Right ventricle myocardium superior (tissue), 1 donor: ENCODE measurements at regions of chr1 and their contacts with region 1.

Region 1: GRCh38 chr1:39098546-39099250 is 72.5 kb downstream of the NDUFS5 start:
- DNase-seq: peak; percentile 63
- ATAC-seq: peak; percentile 81

Region 2: DNA sequence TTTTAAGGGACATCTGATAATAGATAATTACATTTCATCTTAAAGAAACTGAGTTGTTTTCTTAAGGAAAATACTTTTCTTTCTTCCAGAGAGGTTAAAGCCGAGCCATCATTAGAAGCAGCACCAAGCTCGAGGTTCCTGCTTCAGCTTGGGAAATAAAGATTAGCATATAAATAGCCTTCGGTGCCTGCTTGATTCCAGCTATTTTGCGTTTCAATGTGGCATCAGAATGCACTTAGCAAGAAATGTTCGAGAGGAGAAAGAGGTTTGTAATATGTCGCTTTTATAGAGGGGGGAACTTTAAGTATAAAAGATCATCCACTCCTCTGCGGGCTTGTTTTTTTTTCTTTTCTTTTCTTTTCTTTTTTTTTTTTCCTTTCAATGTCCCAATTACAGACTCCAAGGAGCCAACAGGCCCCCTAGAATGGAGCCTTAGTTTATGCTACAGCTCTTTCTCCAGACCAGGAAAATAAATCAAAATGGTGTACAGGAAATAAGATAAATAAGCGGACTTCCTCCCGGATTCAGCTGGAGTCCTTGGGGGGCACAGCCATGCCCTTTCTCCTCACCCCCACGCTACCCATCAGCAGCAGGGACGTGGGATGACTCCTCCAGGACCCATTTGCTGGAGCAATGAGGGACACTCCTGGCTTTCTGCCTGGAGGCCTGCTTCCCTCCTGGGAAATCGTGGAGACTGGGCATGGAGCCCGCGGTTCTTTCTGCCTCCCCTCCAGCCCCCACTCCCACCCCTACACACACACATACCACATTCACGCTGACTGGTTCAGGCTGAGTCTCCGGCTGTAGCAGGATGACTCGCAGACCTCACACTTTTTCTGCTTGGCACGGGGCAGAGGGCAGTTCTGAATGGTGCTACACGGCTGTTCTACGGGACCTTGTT is 370.8 kb before region 1 on chr1:
- intact Hi-C with region 1: no loop called
- DNase-seq: peak; percentile 64
- ATAC-seq: peak; percentile 64

Region 3: GRCh38 chr1:39196244-39197215 is 97.8 kb after region 1 on chr1:
- intact Hi-C with region 1: loop called (anchors 2 kb)
- DNase-seq: no peak
- ATAC-seq: no peak

Region 4: DNA sequence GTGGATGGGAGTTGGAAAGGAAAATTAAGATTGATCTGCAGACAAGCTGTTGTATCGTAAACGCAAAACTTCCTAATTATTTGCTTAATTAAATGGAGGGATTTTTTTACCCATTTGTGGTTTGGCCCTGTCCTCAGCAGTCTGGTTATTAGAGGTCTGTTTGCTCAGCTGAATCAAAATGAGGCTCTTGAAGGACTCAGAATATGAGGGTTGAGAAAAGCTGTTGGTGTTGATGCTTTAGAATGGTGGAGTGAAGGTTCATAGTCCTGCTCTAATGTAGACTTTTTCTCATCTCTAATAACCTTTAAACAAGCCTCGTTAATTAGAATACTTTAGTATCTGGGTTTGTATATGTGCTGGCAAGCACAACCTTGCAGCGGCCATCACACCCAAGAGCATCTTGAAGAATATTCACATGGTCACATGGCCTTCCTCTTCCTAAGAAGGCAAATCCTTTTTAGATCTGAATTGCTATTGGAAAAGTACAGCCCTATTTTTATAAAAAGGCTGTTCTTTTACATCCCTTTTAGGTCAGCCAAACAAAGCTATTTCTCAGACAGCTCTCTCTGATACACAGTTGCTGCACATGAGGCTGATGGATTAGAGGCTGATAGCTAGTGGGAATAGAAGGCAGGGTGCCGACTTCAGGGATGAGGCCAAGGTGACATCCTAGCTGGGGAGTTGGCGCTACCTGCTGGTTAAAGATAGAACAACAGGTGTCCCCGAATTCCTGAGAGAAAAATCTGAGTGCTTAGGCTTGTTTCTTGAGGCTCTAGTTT is 159.6 kb after region 1 on chr1:
- intact Hi-C with region 1: loop called (anchors 2 kb)
- DNase-seq: peak; percentile 59
- ATAC-seq: peak; percentile 86

Region 5: DNA sequence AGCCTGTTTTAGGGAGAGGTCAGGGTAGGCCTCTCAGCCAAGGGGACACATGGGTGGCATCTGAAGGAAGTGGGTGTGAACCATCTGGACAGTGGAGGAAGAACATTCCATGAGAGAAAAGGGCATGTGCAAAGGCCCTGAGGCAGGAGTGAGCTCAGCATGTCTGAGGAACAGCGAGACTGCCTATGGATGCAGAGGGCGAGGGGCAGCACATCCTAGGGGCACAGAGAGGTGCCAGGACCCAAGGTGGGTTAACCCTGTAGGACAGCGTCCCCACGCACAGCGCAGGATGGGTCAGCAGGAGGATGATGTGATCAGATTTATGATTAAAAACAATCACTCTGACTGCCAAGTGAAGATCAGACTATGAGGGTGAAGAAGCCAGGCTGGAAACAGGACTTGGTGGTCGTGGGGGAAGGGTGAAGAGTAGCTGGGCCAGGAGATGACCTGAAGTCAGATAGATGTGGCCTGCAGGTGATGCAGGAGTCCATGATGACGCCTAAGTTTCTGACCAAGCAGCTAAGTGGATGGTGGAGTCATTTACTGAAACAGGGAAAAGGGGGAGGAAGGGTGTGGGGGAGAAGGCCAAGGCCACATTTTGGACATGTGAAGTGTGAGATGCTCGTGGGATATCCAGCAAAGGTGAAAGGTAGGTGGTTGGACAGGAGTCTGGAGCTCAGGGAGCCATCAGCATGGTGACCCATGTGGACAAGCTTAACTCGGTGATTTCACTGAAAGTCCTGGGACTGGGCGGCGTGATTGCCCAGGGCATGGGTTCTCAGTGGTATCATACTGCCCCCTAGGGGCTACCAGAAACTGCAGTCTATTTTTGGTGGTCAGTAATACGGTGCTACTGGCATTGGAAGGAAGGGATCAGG is 440.1 kb after region 1 on chr1:
- intact Hi-C with region 1: loop called (anchors 10 kb)
- DNase-seq: peak; percentile 72
- ATAC-seq: peak; percentile 89